Heart right ventricle (tissue), 16 donors: ENCODE measurements at regions of chr6 and their contacts with region 1.

Region 1: DNA sequence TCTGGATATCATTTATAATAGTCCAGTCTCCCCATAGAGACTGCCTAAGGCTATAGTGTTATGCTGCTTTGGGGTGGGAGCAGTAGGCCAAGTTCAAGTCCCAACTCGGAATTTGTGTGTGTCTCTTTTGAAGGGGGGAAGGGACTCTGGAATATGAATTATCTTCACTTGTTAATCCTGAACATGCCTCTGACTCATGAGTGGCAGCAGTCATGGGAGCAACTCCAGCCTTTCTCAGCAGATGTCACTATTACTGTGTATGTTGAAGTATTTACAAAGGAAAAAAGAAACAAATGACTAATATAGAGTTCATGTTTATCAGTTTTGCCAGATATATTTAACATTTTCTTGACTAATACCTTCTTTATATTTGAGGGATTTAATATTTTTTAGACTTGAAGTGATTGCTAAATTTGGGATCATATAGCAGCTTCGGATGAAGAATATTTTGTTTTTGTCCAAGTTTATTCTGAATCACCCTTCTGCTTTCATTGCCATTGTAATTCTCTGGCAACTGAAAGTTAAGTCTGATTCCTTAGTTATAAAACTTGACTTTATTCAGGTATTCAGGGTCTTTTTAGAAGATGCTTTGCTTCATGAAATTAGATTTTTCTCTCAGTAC is 23.4 kb downstream of the FAM217A start:
- DNase-seq: peak in 1 of 2 donors; percentile 30
- ATAC-seq: peak in 7 of 8 donors; percentile 58 to 92 (median 88)
- H3K4me3 ChIP-seq: no peak overlapping the region
- H3K27ac ChIP-seq: peak overlapping the region in 5 of 10 donors; percentile 7 to 42 (median 26)
- H3K4me1 ChIP-seq: peaks cover 0 to 15% (median 12%) of the 10 kb centered on the region in 9 donors
- H3K27me3 ChIP-seq: no peaks in the 10 kb centered on the region
- CTCF ChIP-seq: peak in 7 of 9 donors; percentile 43 to 71 (median 61)

Region 2: DNA sequence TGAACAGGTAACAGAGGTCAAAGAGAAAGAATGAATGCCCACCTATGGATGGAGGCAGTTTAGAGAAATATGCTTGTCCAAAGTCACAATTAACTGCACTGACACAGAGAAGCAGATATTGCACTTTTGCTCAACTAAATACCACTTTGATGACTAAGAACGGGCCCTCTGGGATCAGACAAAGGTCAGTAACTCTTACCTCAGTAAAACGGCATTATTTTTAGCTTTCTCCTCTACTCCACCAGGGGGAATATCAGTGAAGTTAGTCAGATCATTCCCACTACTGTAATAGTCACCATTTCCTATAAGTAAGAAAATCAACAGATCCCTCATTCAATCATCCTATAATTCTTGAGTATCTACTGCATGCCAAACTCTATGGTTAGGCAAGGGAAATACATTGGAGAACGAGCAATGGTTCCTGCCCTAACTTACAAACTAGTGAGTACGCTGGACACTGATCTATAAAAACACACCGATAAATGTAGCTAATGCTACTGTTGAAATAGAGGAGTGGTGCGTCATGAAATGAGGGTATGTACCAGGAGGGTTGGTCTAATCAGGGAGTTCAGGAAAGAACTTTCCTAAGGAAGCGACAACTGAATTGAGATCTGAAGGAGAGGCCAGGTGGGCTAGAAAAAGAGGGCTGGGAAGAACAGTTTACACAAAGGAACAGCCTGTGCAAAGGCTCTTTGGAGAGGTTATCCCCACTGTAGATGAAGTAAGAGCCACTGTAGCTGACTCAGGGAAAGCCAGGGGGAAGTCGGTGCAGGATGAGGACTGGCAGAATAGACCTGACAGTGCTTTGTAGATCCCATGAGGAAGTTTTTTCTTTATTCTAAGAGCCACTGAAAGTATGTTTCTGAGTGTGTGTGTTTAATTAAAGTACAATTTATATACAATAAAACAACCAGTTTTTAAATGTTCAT is 70.7 kb after region 1 on chr6:
- intact Hi-C with region 1: loop called in 3 of 10 experiments (anchors 5 to 10 kb)
- DNase-seq: no peak
- ATAC-seq: peak in 4 of 8 donors; percentile 49 to 94 (median 76)
- H3K4me3 ChIP-seq: no peak overlapping the region
- H3K27ac ChIP-seq: peak overlapping the region in 2 of 10 donors; percentile 5 to 15
- H3K4me1 ChIP-seq: peaks cover 0 to 17% (median 7%) of the 10 kb centered on the region in 9 donors
- H3K27me3 ChIP-seq: no peaks in the 10 kb centered on the region
- CTCF ChIP-seq: peak in 5 of 9 donors; percentile 8 to 25 (median 16)

Region 3: DNA sequence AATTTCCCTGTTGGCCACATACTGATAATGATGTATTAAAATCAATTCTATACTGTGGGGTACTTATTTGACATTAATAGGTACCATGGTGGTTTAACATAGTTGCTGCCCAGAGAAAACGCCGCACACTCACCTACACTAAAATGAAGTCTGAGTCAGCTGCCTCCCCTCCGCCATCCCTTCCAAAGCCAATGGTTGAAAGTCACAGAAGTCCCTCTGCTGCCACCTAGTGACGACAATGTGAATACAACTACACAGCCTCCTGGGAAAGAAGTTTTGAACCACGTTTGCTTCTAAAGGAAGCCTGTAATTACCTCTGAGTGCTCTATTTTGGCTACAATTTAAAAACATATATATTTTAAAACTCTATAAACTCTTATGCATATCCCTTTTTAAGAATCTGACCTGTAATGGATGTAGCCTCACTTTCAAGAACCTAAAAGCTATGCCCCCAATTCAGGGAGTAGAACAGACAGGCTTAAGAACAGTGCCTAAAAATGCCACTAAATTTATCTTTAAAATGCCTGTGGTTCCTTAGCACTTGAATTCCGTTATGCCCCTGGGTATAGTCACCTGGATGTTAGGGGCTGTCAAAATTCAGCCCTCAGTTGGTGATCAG is 100.4 kb after region 1 on chr6:
- intact Hi-C with region 1: loop called in 8 of 10 experiments (anchors 1 to 5 kb)
- DNase-seq: peak in 1 of 2 donors; percentile 86
- ATAC-seq: peak; percentile 77 to 92 (median 86)
- H3K4me3 ChIP-seq: no peak overlapping the region
- H3K27ac ChIP-seq: no peak overlapping the region
- H3K4me1 ChIP-seq: peaks cover 0 to 4% (median 0%) of the 10 kb centered on the region in 9 donors
- H3K27me3 ChIP-seq: no peaks in the 10 kb centered on the region
- CTCF ChIP-seq: peak; percentile 80 to 93 (median 88)

Region 4: GRCh38 chr6:4210629-4211423 is 155.3 kb after region 1 on chr6:
- intact Hi-C with region 1: loop called in 1 of 10 experiments (anchors 5 kb)
- DNase-seq: peak; percentile 41 to 45
- ATAC-seq: peak; percentile 37 to 78 (median 68)
- H3K4me3 ChIP-seq: no peak overlapping the region
- H3K27ac ChIP-seq: no peak overlapping the region
- H3K4me1 ChIP-seq: peaks cover 0 to 34% (median 11%) of the 10 kb centered on the region in 9 donors
- H3K27me3 ChIP-seq: no peaks in the 10 kb centered on the region
- CTCF ChIP-seq: peak; percentile 47 to 80 (median 74)